Colonic mucosa (tissue), 4 donors: ENCODE measurements at regions of chr3 and their contacts with region 1.

Region 1: DNA sequence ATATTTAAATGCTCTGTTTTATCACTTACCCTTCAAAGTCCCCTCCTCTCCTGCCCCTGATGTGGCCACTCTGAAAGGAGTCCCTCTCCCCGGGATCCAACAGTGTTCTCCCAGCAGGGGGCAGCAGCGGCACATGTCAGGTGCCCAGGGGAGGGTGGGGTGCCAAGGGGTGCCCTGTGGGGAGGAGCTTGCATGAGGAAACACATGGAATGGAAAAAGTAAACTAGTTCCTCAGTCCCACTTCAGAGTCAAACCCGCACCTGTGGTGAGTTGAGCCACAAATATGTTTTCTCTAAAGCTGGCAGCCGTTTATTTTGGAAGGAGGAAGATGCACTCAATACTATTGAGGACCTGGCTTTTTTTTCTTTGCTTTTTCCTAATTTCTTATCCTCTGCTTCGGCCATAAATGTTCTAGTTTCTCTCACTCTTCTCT is 30.1 kb upstream of the NRROS start:
- DNase-seq: peak; percentile 97
- H3K4me3 ChIP-seq: no peak overlapping the region
- H3K27ac ChIP-seq: no peak overlapping the region
- H3K4me1 ChIP-seq: no peaks in the 10 kb centered on the region
- H3K27me3 ChIP-seq: no peaks in the 10 kb centered on the region
- CTCF ChIP-seq: peak; percentile 87

Region 2: GRCh38 chr3:196684548-196685407 is 75.4 kb after region 1 on chr3:
- intact Hi-C with region 1: loop called (anchors 2 kb)
- DNase-seq: peak; percentile 75
- H3K4me3 ChIP-seq: no peak overlapping the region
- H3K27ac ChIP-seq: no peak overlapping the region
- H3K4me1 ChIP-seq: no peaks in the 10 kb centered on the region
- H3K27me3 ChIP-seq: no peaks in the 10 kb centered on the region
- CTCF ChIP-seq: peak; percentile 93